Activated CD4-positive, alpha-beta T cell treated with anti-CD3 and anti-CD28 coated beads, Interleukin-2, amount 10 ng/mL, durations not matched to agents 24 days and 14 days (primary cell): ENCODE measurements at regions of chr12 and their contacts with region 1.

Region 1: DNA sequence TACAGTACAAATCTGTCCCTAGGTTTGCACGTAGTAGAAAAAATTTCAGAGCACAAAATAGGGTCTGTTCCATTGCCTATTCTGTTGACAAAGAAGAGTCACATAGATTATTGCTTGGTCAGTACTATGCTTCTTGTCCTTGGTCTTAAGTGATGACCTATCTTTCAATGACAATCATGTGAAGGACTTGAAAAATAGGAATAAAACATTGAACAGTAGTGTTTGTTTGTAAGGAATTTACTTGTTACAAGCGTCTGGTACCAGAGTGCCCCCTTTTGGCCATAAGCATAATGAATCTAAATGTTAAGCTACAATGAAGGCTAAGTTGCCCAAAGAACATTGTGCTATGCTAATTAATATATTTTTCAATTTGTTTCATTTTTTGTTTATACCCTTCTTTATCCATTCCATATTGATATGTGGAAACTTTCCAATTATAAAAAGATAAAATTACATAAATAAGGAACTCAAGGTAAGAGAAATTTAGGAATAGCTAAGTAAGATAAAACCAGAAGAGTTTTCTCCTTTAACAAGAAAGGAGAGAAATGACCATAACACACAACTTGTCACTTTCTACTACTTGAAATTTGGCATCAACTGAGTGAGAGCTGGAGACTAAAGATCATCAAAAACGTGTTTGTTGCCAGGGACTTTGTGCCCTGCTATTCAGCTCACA is 204.7 kb downstream of the EPS8 start:
- DNase-seq: peak; percentile 79
- H3K4me3 Mint-ChIP-seq: no peak overlapping the region
- H3K27ac Mint-ChIP-seq: no peak overlapping the region
- H3K4me1 Mint-ChIP-seq: peaks cover 13% of the 10 kb centered on the region
- H3K27me3 Mint-ChIP-seq: no peaks in the 10 kb centered on the region

Region 2: GRCh38 chr12:15227004-15227679 is 357.4 kb before region 1 on chr12:
- intact Hi-C with region 1: loop called (anchors 5 kb)
- DNase-seq: peak; percentile 74
- H3K4me3 Mint-ChIP-seq: no peak overlapping the region
- H3K27ac Mint-ChIP-seq: no peak overlapping the region
- H3K4me1 Mint-ChIP-seq: no peaks in the 10 kb centered on the region
- H3K27me3 Mint-ChIP-seq: peaks cover 32% of the 10 kb centered on the region

Region 3: GRCh38 chr12:15276088-15276698 is 308.3 kb before region 1 on chr12:
- intact Hi-C with region 1: loop called (anchors 2 kb)
- DNase-seq: peak; percentile 65
- H3K4me3 Mint-ChIP-seq: no peak overlapping the region
- H3K27ac Mint-ChIP-seq: no peak overlapping the region
- H3K4me1 Mint-ChIP-seq: peaks cover 5% of the 10 kb centered on the region
- H3K27me3 Mint-ChIP-seq: peaks cover under 1% of the 10 kb centered on the region

Region 4: GRCh38 chr12:15621140-15621539 is 36.6 kb after region 1 on chr12:
- intact Hi-C with region 1: no loop called
- DNase-seq: no peak
- H3K4me3 Mint-ChIP-seq: no peak overlapping the region
- H3K27ac Mint-ChIP-seq: no peak overlapping the region
- H3K4me1 Mint-ChIP-seq: no peaks in the 10 kb centered on the region
- H3K27me3 Mint-ChIP-seq: peaks cover 9% of the 10 kb centered on the region